ENCODE measurements at regions of chr14 and their contacts with region 1.

Region 1: DNA sequence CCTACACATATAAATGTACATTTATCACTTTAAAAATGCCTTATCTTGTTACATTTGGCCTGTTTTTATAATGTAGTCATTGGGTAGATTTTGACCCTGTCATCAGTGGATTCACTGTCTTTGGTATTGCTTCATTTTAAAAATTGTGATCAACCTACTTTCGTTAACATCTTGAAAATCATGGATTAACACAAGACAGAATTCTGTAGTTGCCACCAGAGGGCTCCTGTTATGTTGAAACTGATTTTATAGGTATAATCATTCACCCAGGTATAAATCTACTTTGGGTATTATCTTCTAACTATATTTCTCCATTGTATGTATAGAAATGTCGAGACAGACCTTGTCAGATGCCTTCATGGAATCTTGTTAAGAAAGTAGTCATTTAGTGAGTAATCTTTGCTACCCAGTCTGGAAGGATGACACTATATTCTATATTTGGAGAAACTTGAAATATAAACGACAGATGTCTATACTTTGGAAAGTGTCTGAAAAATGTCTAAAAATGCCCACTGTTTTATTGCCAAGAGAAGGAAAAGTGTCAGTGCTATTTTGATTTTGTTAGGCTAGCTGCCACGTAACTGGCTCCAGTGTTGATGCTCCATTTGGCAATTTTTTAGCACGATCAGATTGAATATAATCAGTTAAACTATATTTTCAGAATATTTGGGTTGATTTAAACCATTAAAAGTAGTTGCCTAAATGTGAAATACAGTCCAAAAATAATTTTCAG is 129.4 kb downstream of the PELI2 start:
- DNase-seq: peak; percentile 41
- H3K4me3 Mint-ChIP-seq: no peak overlapping the region
- H3K27ac Mint-ChIP-seq: no peak overlapping the region
- H3K4me1 Mint-ChIP-seq: peaks cover 5% of the 10 kb centered on the region
- H3K27me3 Mint-ChIP-seq: no peaks in the 10 kb centered on the region
- CTCF ChIP-seq: peak; percentile 28

Region 2: DNA sequence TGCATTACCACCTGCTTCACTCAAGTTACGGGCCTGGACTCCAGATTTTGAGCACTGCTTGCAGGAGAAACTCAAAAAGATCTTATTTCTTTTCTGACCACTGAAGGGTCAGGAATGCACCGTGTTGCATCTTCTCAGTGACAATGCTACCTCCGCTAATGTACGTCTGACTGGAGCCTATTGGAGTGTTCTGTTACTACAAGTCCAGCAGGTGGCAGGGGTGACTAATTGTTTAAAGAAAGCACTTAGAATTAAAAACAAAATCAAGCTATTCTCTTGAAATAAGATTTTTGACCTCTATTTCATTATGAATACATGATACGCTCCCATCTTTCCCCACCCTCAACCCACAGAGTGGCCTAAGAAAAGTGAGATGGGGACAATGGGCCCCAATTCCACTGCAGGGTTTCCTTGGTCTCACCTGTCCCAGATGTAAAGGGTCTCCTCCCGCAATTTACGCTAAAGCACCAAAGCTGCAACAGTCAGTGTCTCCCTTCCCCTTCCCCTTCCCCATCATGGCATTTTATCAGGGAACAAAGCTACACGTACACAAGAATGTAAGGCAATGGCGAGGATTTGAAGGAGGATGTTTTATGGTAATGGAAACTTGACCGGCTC is 809.5 kb before region 1 on chr14:
- CTCF ChIA-PET with region 1: no interaction called
- POLR2A ChIA-PET with region 1: no interaction called
- intact Hi-C with region 1: loop called (anchors 5 kb)
- DNase-seq: peak; percentile 68
- H3K4me3 Mint-ChIP-seq: no peak overlapping the region
- H3K27ac Mint-ChIP-seq: no peak overlapping the region
- H3K4me1 Mint-ChIP-seq: no peaks in the 10 kb centered on the region
- H3K27me3 Mint-ChIP-seq: peaks cover 16% of the 10 kb centered on the region
- CTCF ChIP-seq: peak; percentile 63

Region 3: DNA sequence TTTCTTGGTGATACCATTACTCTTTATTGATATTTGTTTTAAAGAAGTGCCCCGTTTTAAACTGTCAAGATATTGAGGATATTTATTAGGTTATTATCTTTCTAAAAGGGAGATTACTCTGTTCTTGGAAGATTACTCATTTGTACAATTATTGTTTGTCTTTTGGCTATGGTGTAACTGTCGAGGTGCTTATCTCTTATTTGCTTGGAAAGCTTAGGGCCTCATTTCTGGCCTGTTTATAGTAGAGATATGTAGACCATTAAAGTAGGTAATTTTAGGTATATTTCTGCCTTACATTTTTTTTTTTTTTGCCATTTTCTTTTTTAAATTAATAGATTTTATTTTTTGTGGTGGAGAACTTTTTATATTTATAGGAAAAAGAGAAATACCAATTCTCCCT is 593.4 kb before region 1 on chr14:
- CTCF ChIA-PET with region 1: no interaction called
- POLR2A ChIA-PET with region 1: no interaction called
- intact Hi-C with region 1: no loop called
- DNase-seq: no peak
- H3K4me3 Mint-ChIP-seq: no peak overlapping the region
- H3K27ac Mint-ChIP-seq: no peak overlapping the region
- H3K4me1 Mint-ChIP-seq: no peaks in the 10 kb centered on the region
- H3K27me3 Mint-ChIP-seq: no peaks in the 10 kb centered on the region
- CTCF ChIP-seq: no peak

Region 4: GRCh38 chr14:55707365-55707804 is 540.2 kb before region 1 on chr14:
- CTCF ChIA-PET with region 1: interaction called, 3 read pairs
- POLR2A ChIA-PET with region 1: no interaction called
- intact Hi-C with region 1: loop called (anchors 10 kb)
- DNase-seq: peak; percentile 50
- H3K4me3 Mint-ChIP-seq: no peak overlapping the region
- H3K27ac Mint-ChIP-seq: no peak overlapping the region
- H3K4me1 Mint-ChIP-seq: peaks cover 25% of the 10 kb centered on the region
- H3K27me3 Mint-ChIP-seq: no peaks in the 10 kb centered on the region
- CTCF ChIP-seq: peak; percentile 58

Region 5: GRCh38 chr14:56172571-56172971 is 75.1 kb before region 1 on chr14:
- CTCF ChIA-PET with region 1: no interaction called
- POLR2A ChIA-PET with region 1: no interaction called
- intact Hi-C with region 1: no loop called
- DNase-seq: peak; percentile 47
- H3K4me3 Mint-ChIP-seq: no peak overlapping the region
- H3K27ac Mint-ChIP-seq: peak overlapping the region; percentile 82
- H3K4me1 Mint-ChIP-seq: peaks cover 10% of the 10 kb centered on the region
- H3K27me3 Mint-ChIP-seq: no peaks in the 10 kb centered on the region
- CTCF ChIP-seq: no peak

Region 6: GRCh38 chr14:56237398-56237797 is 10.2 kb before region 1 on chr14:
- CTCF ChIA-PET with region 1: no interaction called
- POLR2A ChIA-PET with region 1: no interaction called
- intact Hi-C with region 1: no loop called
- DNase-seq: no peak
- H3K4me3 Mint-ChIP-seq: no peak overlapping the region
- H3K27ac Mint-ChIP-seq: no peak overlapping the region
- H3K4me1 Mint-ChIP-seq: peaks cover 6% of the 10 kb centered on the region
- H3K27me3 Mint-ChIP-seq: no peaks in the 10 kb centered on the region
- CTCF ChIP-seq: no peak

Region 7: GRCh38 chr14:56339855-56340701 is 92.4 kb after region 1 on chr14:
- CTCF ChIA-PET with region 1: interaction called, 3 read pairs
- POLR2A ChIA-PET with region 1: no interaction called
- intact Hi-C with region 1: loop called (anchors 10 kb)
- DNase-seq: peak; percentile 91
- H3K4me3 Mint-ChIP-seq: no peak overlapping the region
- H3K27ac Mint-ChIP-seq: no peak overlapping the region
- H3K4me1 Mint-ChIP-seq: peaks cover 9% of the 10 kb centered on the region
- H3K27me3 Mint-ChIP-seq: no peaks in the 10 kb centered on the region
- CTCF ChIP-seq: peak; percentile 45